Right lobe of liver (tissue), 6 donors: ENCODE measurements at regions of chr22 and their contacts with region 1.

Region 1: DNA sequence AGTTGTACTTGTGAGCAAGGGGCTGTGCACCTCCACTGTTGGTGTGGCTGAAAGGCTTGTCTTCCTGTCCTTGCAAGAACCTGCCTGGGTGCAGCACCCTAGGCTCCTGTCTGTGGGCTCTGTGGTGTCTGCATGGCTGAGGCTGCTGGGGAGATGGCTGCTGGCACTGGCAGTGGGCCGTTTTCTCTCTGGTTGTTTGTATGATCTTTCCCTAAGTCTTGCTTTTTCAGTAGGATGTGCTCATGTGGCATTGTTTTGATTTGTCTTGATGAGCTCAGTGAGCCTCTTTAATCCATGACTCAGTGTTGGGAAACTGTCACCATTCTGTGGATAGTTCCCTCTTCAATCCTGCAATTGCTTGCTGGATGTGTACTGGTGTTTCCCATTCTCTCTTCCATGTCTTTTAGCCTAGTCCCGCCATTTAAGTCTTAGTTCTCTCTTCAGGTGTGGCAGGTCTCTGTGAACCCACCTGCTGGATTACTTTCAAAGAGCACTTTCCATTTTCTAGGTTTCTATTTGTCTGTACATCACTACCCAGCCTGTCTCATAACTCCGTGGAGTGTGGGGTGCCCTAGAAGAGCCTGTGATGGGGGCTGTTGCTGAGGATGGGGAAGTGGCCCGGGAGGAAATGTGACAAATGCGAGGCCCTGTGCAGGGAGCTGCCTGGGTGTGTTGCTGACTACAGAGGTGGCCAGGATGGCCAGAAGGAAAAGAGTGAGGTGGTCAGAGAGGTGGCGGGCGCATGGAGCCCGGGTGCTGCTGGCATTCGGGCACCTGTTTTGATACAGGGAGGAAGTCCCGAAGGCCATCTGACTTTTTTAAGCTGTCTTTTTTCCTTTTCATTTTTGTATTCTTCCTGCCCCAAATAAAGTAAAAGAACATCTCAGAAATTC is 10.6 kb downstream of the DGCR8 start:
- DNase-seq: no peak
- ATAC-seq: no peak
- H3K4me3 ChIP-seq: no peak overlapping the region
- H3K27ac ChIP-seq: no peak overlapping the region
- H3K4me1 ChIP-seq: peaks cover 0 to 26% (median 12%) of the 10 kb centered on the region in 4 donors
- H3K27me3 ChIP-seq: no peaks in the 10 kb centered on the region
- CTCF ChIP-seq: no peak
- POLR2A ChIP-seq: no peak

Region 2: GRCh38 chr22:19962233-19962908 is 128.2 kb before region 1 on chr22:
- intact Hi-C with region 1: loop called in 1 of 2 experiments (anchors 10 kb)
- DNase-seq: peak; percentile 86 to 93 (median 92)
- ATAC-seq: peak; percentile 48 to 64 (median 62)
- H3K4me3 ChIP-seq: peak overlapping the region; percentile 27 to 56 (median 55)
- H3K27ac ChIP-seq: peak overlapping the region; percentile 77 to 97 (median 82)
- H3K4me1 ChIP-seq: peaks cover 3 to 44% (median 24%) of the 10 kb centered on the region in 4 donors
- H3K27me3 ChIP-seq: no peaks in the 10 kb centered on the region
- CTCF ChIP-seq: peak; percentile 60 to 84 (median 72)
- POLR2A ChIP-seq: no peak